PC-9 (cell line): ENCODE measurements at regions of chr1 and their contacts with region 1.

Region 1: DNA sequence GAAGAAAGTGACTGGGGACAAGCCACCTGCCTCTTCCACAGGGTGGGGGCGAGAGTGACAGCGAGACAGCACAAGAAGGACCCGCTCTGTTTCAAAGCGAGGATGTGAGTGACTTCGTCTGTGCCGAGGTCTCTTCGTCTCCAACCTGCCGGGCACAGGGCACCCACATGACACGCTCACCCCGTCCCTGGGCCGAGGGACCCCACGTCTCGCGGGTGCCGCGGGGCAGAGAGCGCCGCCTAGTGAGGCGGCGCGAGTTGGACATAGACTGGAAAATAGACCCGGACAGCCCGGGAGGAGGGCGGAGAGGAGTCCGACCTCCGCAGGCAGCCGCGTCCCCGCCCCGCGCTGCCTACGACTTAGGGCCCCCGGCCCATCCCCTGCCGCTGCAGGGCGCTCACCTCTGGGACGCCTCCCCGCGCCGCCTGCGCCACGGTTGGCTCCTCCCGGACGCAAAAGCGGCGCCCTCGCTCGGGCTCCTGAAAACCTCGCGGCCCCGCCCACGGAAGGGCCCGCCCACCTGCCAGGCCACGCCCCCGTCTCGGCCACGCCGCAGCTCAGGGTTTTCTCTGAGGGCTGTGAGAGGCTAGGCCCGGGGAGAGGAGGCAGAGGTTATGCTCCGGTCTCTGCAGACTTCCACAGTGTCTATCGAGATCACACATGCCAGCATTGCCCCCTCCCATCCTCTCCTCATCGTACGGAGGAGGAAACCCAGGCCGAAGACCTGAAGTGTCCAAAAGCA is at the start of gene TLR5:
- DNase-seq: peak; percentile 76 to 88
- H3K4me3 ChIP-seq: peak within 1 kb of the TSS; percentile 61
- H3K27ac ChIP-seq: no peak within 1 kb of the TSS
- H3K4me1 ChIP-seq: peaks cover 15% of the 10 kb centered on the region; the same call in 1 of the 2 replicates
- H3K27me3 ChIP-seq: no peaks in the 10 kb centered on the region
- CTCF ChIP-seq: peak; percentile 83
- total RNA-seq, gene TLR5: 2.5 and 3.4 TPM in 2 replicates

Region 2: GRCh38 chr1:223074445-223075300 is 68.3 kb before region 1 on chr1:
- CTCF ChIA-PET with region 1: no interaction called
- POLR2A ChIA-PET with region 1: no interaction called
- intact Hi-C with region 1: no loop called
- DNase-seq: no peak
- H3K4me3 ChIP-seq: no peak overlapping the region
- H3K27ac ChIP-seq: no peak overlapping the region
- H3K4me1 ChIP-seq: no peaks in the 10 kb centered on the region
- H3K27me3 ChIP-seq: peaks cover 48% of the 10 kb centered on the region
- CTCF ChIP-seq: no peak

Region 3: DNA sequence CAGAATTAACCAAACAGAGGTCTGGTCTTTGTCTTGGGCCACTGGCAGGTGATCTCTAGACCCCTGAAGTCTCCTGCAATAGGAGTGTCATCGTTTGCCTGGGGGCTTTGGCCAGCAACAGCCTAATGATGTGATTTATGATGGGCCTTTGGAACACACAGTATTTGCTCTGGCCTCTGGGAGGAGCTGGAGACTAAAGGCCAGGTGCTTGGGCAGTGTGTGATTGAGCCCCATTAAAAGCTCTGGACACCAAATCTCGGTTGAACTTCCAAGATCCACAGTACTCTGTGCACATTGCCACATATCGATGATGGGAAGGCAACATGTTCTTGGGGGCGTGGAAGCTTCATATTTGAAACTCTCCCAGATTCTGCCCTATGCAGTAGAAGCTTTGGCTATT is 32.1 kb after region 1 on chr1:
- CTCF ChIA-PET with region 1: no interaction called
- POLR2A ChIA-PET with region 1: no interaction called
- intact Hi-C with region 1: loop called (anchors 5 kb)
- DNase-seq: no peak
- H3K4me3 ChIP-seq: no peak overlapping the region
- H3K27ac ChIP-seq: no peak overlapping the region
- H3K4me1 ChIP-seq: peaks cover 16% of the 10 kb centered on the region
- H3K27me3 ChIP-seq: no peaks in the 10 kb centered on the region
- CTCF ChIP-seq: peak; percentile 50